ENCODE measurements at regions of chr3 and their contacts with region 1.

Region 1: DNA sequence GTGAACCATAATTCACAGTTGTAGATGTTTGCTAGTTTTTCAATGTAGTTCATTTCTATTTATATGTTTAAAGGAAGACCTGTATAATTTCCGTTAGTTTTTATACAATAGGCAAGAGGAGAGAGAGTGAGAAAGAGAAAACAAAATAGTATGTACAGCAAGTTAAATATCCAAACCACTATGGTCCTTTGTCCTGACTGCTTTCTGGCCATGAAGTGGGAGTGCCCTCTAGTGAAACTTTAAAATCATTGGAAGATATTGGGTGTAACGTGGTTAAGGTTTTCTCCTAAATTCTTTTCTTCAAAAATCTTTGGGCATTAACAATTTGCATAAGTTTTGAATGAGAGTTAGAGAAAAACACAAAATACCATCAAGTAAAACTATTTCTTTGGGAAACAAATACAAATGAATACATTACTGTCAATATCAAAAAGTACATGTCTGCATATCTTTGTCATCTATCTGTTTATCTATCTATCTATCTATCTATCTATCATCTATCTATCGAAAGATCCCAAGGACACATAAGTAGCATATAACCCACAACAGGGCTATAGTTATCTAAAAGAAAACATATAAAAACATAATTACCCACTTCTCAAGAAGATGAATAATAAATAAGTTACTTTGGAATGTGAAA is 534.6 kb upstream of the ATP11B start:
- DNase-seq: no peak
- ATAC-seq: peak in 1 of 8 donors; percentile 57
- H3K4me3 ChIP-seq: no peak overlapping the region
- H3K27ac ChIP-seq: no peak overlapping the region
- H3K4me1 ChIP-seq: no peaks in the 10 kb centered on the region
- H3K27me3 ChIP-seq: peaks cover 0 to 47% (median 30%) of the 10 kb centered on the region in 7 donors
- CTCF ChIP-seq: peak; percentile 19 to 67 (median 56)

Region 2: GRCh38 chr3:181210275-181210674 is 1048.4 kb before region 1 on chr3:
- intact Hi-C with region 1: loop called in 3 of 10 experiments (anchors 5 to 10 kb)
- DNase-seq: no peak
- ATAC-seq: no peak
- H3K4me3 ChIP-seq: no peak overlapping the region
- H3K27ac ChIP-seq: no peak overlapping the region
- H3K4me1 ChIP-seq: no peaks in the 10 kb centered on the region
- H3K27me3 ChIP-seq: peaks cover 0 to 33% (median 10%) of the 10 kb centered on the region in 7 donors
- CTCF ChIP-seq: peak in 8 of 9 donors; percentile 16 to 52 (median 35)

Region 3: GRCh38 chr3:181709537-181710279 is 549.0 kb before region 1 on chr3:
- intact Hi-C with region 1: loop called (anchors 1 to 10 kb)
- DNase-seq: peak; percentile 66 to 68
- ATAC-seq: peak in 3 of 8 donors; percentile 36 to 61 (median 51)
- H3K4me3 ChIP-seq: no peak overlapping the region
- H3K27ac ChIP-seq: no peak overlapping the region
- H3K4me1 ChIP-seq: peaks cover 0 to 32% (median 27%) of the 10 kb centered on the region in 9 donors
- H3K27me3 ChIP-seq: peaks cover 34 to 100% (median 100%) of the 10 kb centered on the region in 7 donors
- CTCF ChIP-seq: peak; percentile 65 to 91 (median 83)